Activated naive CD4-positive, alpha-beta T cell treated with anti-CD3 and anti-CD28 coated beads for 36 hours (primary cell): ENCODE measurements at regions of chr2 and their contacts with region 1.

Region 1: DNA sequence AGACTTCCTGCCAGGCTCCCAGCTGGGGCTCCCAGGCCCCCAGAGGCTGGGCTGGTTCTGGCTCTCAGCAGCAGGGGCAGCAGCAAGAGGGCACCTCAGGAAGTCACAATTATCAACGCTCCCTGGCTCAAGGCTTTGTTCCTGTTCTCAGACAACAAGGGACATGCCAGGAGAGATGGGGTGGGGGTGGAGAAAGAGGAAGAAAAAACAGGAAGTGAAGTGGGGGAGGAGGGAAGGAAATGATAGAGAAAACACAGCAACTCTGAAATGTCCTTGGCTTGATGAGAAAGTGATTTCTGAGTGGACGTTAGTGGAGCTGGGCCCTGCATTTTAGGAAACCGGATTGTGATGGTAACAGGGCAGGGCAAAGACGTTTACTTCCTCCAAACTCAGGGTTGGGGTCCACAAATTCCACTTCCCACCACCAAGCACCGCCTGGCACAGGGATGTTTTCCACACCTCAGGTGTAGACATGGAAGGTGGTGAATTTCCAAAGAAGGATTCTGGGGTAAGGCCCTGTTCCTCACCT is 40.4 kb downstream of the CYRIA start:
- DNase-seq: no peak
- H3K4me3 Mint-ChIP-seq: no peak overlapping the region
- H3K27ac Mint-ChIP-seq: no peak overlapping the region
- H3K4me1 Mint-ChIP-seq: peaks cover 45% of the 10 kb centered on the region
- H3K27me3 Mint-ChIP-seq: no peaks in the 10 kb centered on the region

Region 2: DNA sequence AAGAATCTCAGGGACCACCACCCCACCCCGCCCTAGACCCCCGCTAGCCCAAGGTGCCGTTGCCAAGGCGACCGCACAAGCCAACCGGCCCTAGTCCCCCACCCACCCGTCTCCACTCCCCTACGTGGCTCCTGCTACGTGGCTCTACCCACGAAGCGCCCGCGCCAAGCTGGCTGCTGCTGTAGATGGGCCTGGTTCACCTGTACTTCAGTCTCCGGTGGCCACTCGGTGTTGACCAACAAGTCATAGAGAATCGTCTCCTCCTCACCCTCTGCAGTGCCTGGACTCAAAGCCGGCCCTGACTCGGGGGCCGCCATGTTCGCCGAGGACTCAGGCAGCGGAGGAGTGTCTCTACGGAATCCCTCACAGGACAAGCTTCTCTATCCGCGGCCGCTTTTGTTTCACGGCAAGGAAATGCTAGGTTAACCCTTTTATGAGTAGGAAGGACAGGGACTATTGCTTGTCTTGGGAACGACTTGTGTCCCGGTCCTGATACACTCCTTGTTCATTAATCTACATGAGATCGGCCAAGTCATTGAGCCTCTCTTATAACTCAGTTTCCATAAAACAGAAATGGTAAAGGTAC is 1064.2 kb before region 1 on chr2 and contains the start of gene NBAS:
- CTCF ChIA-PET with region 1: no interaction called
- intact Hi-C with region 1: no loop called
- DNase-seq: peak; percentile 94
- H3K4me3 Mint-ChIP-seq: peak within 1 kb of the TSS; percentile 98
- H3K27ac Mint-ChIP-seq: peak within 1 kb of the TSS; percentile 92
- H3K4me1 Mint-ChIP-seq: peaks cover 32% of the 10 kb centered on the region
- H3K27me3 Mint-ChIP-seq: no peaks in the 10 kb centered on the region
- total RNA-seq, gene NBAS: 45.5 to 46.4 TPM

Region 3: GRCh38 chr2:15818205-15818809 is 807.0 kb before region 1 on chr2:
- CTCF ChIA-PET with region 1: no interaction called
- intact Hi-C with region 1: no loop called
- DNase-seq: no peak
- H3K4me3 Mint-ChIP-seq: no peak overlapping the region
- H3K27ac Mint-ChIP-seq: no peak overlapping the region
- H3K4me1 Mint-ChIP-seq: no peaks in the 10 kb centered on the region
- H3K27me3 Mint-ChIP-seq: peaks cover 38% of the 10 kb centered on the region

Region 4: DNA sequence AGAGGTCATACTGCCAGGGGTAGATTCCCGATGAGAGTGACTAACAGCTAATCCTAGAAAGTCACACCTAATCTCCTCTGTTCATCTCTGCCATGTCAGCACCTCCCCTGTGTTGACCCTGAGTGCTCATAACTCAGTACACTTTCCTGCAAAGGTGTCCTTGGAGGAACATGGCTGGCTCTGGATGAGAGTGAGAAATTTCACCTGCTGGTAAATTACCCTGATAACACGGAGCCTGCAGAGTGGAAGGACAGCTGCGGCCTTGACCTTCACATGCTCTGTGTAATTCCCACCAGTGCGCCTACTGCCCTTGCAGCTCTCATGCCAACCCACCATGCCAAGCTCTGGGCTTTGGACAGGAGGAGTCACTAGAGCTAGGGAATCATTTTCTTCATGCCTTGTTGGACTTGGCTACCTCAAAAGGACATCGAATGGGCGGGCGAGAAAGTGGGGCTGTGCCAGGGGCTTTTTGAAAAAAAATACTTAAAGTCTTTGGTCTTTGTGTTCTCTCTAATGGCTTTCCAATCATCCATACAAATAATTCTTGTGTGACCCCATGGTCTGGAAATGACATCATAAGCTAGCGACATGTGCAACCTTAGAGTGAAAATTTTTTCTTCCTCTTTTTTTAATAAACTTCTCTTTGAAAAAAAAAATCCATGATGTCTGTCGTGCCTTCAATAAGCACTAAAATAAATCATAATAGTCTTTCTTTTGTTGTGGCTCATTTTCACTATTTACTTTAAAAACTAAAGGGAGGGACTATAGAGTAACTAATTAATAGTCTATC is 365.0 kb before region 1 on chr2:
- CTCF ChIA-PET with region 1: no interaction called
- intact Hi-C with region 1: no loop called
- DNase-seq: no peak
- H3K4me3 Mint-ChIP-seq: no peak overlapping the region
- H3K27ac Mint-ChIP-seq: no peak overlapping the region
- H3K4me1 Mint-ChIP-seq: peaks cover 13% of the 10 kb centered on the region
- H3K27me3 Mint-ChIP-seq: no peaks in the 10 kb centered on the region

Region 5: GRCh38 chr2:16635791-16636699 is 10.8 kb after region 1 on chr2:
- CTCF ChIA-PET with region 1: interaction called, 6 read pairs
- intact Hi-C with region 1: loop called (anchors 2 kb)
- DNase-seq: no peak
- H3K4me3 Mint-ChIP-seq: no peak overlapping the region
- H3K27ac Mint-ChIP-seq: no peak overlapping the region
- H3K4me1 Mint-ChIP-seq: peaks cover 22% of the 10 kb centered on the region
- H3K27me3 Mint-ChIP-seq: peaks cover 21% of the 10 kb centered on the region

Region 6: DNA sequence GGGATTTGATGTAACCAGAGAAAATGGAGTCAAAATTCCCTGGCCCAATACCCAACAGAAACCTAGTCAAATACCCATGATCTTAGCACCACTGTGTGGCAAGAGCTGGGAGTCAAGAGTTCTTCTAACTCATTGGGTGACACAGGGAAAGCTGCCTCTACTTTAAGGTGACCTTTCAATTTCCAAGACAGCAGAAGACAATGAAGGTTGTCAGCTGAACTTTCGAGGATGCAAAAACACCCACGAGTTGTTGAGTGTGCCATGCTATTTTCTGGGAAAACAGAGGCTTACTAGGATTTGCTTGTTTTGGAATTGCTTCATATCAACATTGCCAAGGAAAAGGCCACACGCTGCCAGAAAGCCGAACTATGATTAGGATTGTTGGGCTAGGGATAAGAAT is 102.0 kb after region 1 on chr2:
- CTCF ChIA-PET with region 1: no interaction called
- intact Hi-C with region 1: loop called (anchors 1 kb)
- DNase-seq: no peak
- H3K4me3 Mint-ChIP-seq: no peak overlapping the region
- H3K27ac Mint-ChIP-seq: no peak overlapping the region
- H3K4me1 Mint-ChIP-seq: peaks cover 27% of the 10 kb centered on the region
- H3K27me3 Mint-ChIP-seq: peaks cover 23% of the 10 kb centered on the region

Region 7: GRCh38 chr2:17672583-17673317 is 1047.5 kb after region 1 on chr2:
- CTCF ChIA-PET with region 1: no interaction called
- intact Hi-C with region 1: loop called (anchors 10 kb)
- DNase-seq: no peak
- H3K4me3 Mint-ChIP-seq: no peak overlapping the region
- H3K27ac Mint-ChIP-seq: no peak overlapping the region
- H3K4me1 Mint-ChIP-seq: peaks cover 11% of the 10 kb centered on the region
- H3K27me3 Mint-ChIP-seq: no peaks in the 10 kb centered on the region